B cell (primary cell): ENCODE measurements at regions of chr9 and their contacts with region 1.

Region 1: DNA sequence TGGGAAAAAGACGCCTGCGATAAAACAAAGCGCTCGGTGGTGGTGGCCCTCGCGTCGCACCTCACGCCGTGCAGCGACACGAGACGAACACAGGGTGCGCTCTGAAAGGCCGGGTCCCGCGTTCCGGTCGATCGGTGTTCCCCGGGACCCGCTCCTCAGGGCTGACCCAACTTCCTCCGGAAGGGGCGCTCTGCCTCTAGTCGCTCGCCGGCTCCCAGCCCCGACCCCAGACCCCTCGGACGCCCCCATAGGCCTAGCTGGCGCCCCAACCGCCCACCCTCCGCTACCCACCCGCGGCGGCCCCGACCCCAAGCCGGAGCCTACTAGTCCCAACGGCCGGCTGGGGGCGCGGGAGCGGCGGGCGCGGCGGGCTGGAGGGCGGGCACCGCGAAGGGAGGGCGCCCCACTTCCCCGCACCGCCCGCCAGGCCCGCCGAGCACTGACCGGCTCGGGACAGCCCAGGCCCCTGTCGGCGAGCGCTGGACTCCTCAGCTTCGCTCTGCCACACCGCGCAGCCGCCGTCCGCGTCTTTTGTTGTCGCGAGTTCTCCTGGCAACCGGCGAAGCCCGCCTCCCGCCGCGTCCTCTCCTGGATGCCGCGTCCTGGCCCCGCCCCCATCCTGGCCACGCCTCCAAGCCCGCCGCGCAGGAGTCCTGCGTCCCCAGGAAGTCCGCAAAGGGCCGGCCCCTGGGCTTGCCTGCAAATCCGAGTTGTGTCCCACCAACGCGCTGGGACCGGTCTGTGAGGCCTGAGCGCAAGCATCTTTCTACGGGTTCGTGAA is at the start of gene KIF27:
- DNase-seq: peak; percentile 95
- ATAC-seq: peak; percentile 89
- H3K4me3 ChIP-seq: peak within 1 kb of the TSS; percentile 61 to 74 (median 67)
- H3K4me3 Mint-ChIP-seq: peak within 1 kb of the TSS; percentile 91
- H3K27ac ChIP-seq: peak within 1 kb of the TSS; percentile 84 to 99
- H3K27ac Mint-ChIP-seq: peak within 1 kb of the TSS; percentile 95
- H3K4me1 ChIP-seq: peaks cover 10 to 17% of the 10 kb centered on the region in 2 donors
- H3K4me1 Mint-ChIP-seq: peaks cover 18% of the 10 kb centered on the region
- H3K27me3 ChIP-seq: no peaks in the 10 kb centered on the region
- H3K27me3 Mint-ChIP-seq: no peaks in the 10 kb centered on the region
- CTCF ChIP-seq: peak; percentile 71
- total RNA-seq, gene KIF27: 10.0 and 10.7 TPM in 2 replicates

Region 2: GRCh38 chr9:83622939-83623678 is 298.0 kb before region 1 on chr9 and contains the start of gene IDNK:
- CTCF ChIA-PET with region 1: interaction called, 9 read pairs
- POLR2A ChIA-PET with region 1: no interaction called
- intact Hi-C with region 1: loop called (anchors 2 kb)
- DNase-seq: peak; percentile 85
- ATAC-seq: peak; percentile 88
- H3K4me3 ChIP-seq: peak within 1 kb of the TSS; percentile 47 to 87 (median 79)
- H3K4me3 Mint-ChIP-seq: peak within 1 kb of the TSS; percentile 94
- H3K27ac ChIP-seq: peak within 1 kb of the TSS; percentile 76 to 88
- H3K27ac Mint-ChIP-seq: peak within 1 kb of the TSS; percentile 98
- H3K4me1 ChIP-seq: peaks cover 9 to 21% of the 10 kb centered on the region in 2 donors
- H3K4me1 Mint-ChIP-seq: peaks cover 33% of the 10 kb centered on the region
- H3K27me3 ChIP-seq: no peaks in the 10 kb centered on the region
- H3K27me3 Mint-ChIP-seq: no peaks in the 10 kb centered on the region
- CTCF ChIP-seq: no peak
- total RNA-seq, gene IDNK: 11.2 and 11.6 TPM in 2 replicates

Region 3: GRCh38 chr9:83707768-83708514 is 213.2 kb before region 1 on chr9 and contains the start of gene UBQLN1:
- CTCF ChIA-PET with region 1: interaction called, 7 read pairs
- POLR2A ChIA-PET with region 1: interaction called, 12 read pairs
- intact Hi-C with region 1: loop called (anchors 1 kb)
- DNase-seq: peak; percentile 97
- ATAC-seq: peak; percentile 83
- H3K4me3 ChIP-seq: peak within 1 kb of the TSS; percentile 75 to 95 (median 87)
- H3K4me3 Mint-ChIP-seq: peak within 1 kb of the TSS; percentile 93
- H3K27ac ChIP-seq: peak within 1 kb of the TSS; percentile 95 to 96
- H3K27ac Mint-ChIP-seq: peak within 1 kb of the TSS; percentile 95
- H3K4me1 ChIP-seq: peaks cover 20% of the 10 kb centered on the region in 2 donors
- H3K4me1 Mint-ChIP-seq: peaks cover 46% of the 10 kb centered on the region
- H3K27me3 ChIP-seq: no peaks in the 10 kb centered on the region
- H3K27me3 Mint-ChIP-seq: no peaks in the 10 kb centered on the region
- CTCF ChIP-seq: no peak
- total RNA-seq, gene UBQLN1: 101 and 108 TPM in 2 replicates

Region 4: DNA sequence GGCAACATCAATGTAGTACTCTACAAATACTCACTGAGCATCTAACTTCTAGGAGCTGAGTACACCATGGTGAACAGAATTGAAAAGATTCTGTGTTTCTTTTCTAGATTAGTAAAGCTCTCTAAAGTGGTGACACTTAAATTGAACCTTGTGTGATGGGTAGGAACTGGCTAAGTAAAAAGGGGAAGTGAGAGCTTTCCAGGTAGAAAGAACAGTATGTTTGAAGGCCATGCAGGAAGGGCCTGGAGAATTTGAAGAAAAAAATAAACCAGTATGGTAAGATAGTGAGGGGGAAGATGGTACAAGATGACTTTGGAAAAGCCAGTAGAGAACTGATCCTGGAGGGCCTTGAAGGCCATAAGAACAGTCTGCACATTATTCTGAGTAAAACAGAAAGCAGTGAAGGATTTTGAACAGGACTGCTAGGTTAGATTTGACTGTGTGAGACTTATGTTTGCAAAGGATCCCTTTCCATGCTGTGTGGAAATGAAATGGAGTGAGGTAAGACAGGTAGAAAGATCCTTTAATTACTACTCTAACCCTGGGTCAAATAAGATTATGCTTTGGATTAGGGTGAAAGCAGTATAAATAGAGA is 166.6 kb before region 1 on chr9:
- CTCF ChIA-PET with region 1: no interaction called
- POLR2A ChIA-PET with region 1: no interaction called
- intact Hi-C with region 1: no loop called
- DNase-seq: peak; percentile 29
- ATAC-seq: peak; percentile 28
- H3K4me3 ChIP-seq: no peak overlapping the region
- H3K4me3 Mint-ChIP-seq: no peak overlapping the region
- H3K27ac ChIP-seq: peak overlapping the region in 1 of 2 donors; percentile 7
- H3K27ac Mint-ChIP-seq: no peak overlapping the region
- H3K4me1 ChIP-seq: peaks cover 3 to 6% of the 10 kb centered on the region in 2 donors
- H3K4me1 Mint-ChIP-seq: peaks cover 4% of the 10 kb centered on the region
- H3K27me3 ChIP-seq: no peaks in the 10 kb centered on the region
- H3K27me3 Mint-ChIP-seq: no peaks in the 10 kb centered on the region
- CTCF ChIP-seq: no peak

Region 5: DNA sequence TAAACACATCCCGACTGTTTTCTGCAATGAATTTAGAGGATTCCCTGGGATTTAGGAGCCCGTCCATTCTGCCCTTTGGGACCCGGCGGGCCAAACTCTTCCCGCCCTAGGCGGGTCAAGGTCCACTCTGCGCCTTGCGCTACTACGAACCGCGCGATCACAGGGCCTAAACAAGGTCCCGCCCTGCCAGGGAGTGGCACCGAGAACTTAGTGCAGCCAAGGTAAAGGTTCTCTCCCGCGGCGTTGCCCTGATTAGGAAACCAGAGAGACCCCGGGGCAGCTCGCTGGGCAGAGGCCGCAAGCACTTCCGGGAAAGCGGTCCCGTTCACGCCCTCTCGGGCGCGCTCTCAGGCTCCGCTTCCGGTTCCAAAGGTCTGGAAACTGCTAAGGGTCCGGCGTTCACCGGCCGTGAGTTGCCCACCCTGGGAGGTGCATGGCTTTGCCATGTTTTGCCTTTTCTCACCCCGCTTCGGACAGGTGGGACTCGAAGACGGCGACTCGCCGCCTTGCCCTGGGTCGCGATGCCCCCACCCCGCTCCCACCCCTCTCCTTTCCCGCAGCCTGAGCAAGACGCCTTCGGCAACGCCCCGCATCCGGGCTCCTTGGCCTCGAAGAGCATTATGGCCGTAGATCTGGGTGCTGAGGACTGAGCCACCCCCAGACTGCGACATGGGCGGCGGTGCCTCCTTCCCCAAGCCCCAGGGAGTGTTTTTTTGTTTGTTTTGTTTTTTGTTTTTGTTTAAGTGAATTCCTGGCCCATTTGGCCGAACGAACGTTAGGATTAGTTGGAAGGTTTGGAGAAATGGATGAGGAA is 35.5 kb after region 1 on chr9:
- CTCF ChIA-PET with region 1: no interaction called
- POLR2A ChIA-PET with region 1: no interaction called
- intact Hi-C with region 1: loop called (anchors 1 kb)
- DNase-seq: peak; percentile 65
- ATAC-seq: peak; percentile 73
- H3K4me3 ChIP-seq: peak overlapping the region; percentile 81 to 96 (median 90)
- H3K4me3 Mint-ChIP-seq: peak overlapping the region; percentile 90
- H3K27ac ChIP-seq: peak overlapping the region; percentile 63 to 72
- H3K27ac Mint-ChIP-seq: peak overlapping the region; percentile 91
- H3K4me1 ChIP-seq: peaks cover 8 to 11% of the 10 kb centered on the region in 2 donors
- H3K4me1 Mint-ChIP-seq: peaks cover 18% of the 10 kb centered on the region
- H3K27me3 ChIP-seq: no peaks in the 10 kb centered on the region
- H3K27me3 Mint-ChIP-seq: no peaks in the 10 kb centered on the region
- CTCF ChIP-seq: no peak

Region 6: GRCh38 chr9:85741875-85742629 is 1820.9 kb after region 1 on chr9 and contains the start of gene AGTPBP1:
- CTCF ChIA-PET with region 1: no interaction called
- POLR2A ChIA-PET with region 1: no interaction called
- intact Hi-C with region 1: loop called (anchors 2 kb)
- DNase-seq: peak; percentile 97
- ATAC-seq: peak; percentile 92
- H3K4me3 ChIP-seq: peak within 1 kb of the TSS; percentile 80 to 91 (median 82)
- H3K4me3 Mint-ChIP-seq: peak within 1 kb of the TSS; percentile 99
- H3K27ac ChIP-seq: peak within 1 kb of the TSS; percentile 76 to 96
- H3K27ac Mint-ChIP-seq: peak within 1 kb of the TSS; percentile 96
- H3K4me1 ChIP-seq: peaks cover 9 to 11% of the 10 kb centered on the region in 2 donors
- H3K4me1 Mint-ChIP-seq: peaks cover 21% of the 10 kb centered on the region
- H3K27me3 ChIP-seq: peaks cover 0 to 3% (median 0%) of the 10 kb centered on the region in 4 experiments
- H3K27me3 Mint-ChIP-seq: peaks cover 7% of the 10 kb centered on the region
- CTCF ChIP-seq: no peak
- total RNA-seq, gene AGTPBP1: 33.1 and 35.4 TPM in 2 replicates